Caco-2 (cell line): ENCODE measurements at regions of chr2 and their contacts with region 1.

Region 1: GRCh38 chr2:218444692-218445357 is 25.9 kb downstream of the VIL1 start:
- DNase-seq: peak; percentile 84 to 91
- H3K4me3 ChIP-seq: no peak overlapping the region
- H3K4me3 Mint-ChIP-seq: peak overlapping the region; percentile 60
- H3K27ac Mint-ChIP-seq: peak overlapping the region; percentile 74
- H3K4me1 ChIP-seq: peaks cover 61% of the 10 kb centered on the region
- H3K4me1 Mint-ChIP-seq: peaks cover 31% of the 10 kb centered on the region
- H3K27me3 ChIP-seq: no peaks in the 10 kb centered on the region
- H3K27me3 Mint-ChIP-seq: no peaks in the 10 kb centered on the region
- CTCF ChIP-seq: no peak

Region 2: DNA sequence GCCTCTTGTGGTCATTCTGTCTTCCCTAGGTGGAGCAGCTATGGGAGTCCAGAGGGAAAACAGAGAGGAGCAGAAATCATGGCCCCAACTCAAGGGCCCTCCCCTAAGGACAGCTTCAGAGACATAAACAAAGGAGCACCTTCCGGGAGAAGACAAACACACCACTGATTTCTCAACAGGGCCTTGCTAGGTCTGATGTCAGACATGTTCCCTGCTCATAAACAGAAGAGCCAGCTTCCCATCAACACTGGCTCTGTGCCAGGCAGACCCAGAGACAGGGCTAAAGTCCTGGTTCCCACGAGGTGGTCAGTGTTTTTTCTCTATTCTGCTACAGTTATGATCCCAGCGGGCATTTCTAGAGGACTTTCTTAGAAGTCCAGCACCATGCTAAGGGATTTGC is 299.7 kb before region 1 on chr2:
- CTCF ChIA-PET with region 1: no interaction called
- POLR2A ChIA-PET with region 1: no interaction called
- intact Hi-C with region 1: no loop called
- DNase-seq: no peak
- H3K4me3 ChIP-seq: no peak overlapping the region
- H3K4me3 Mint-ChIP-seq: no peak overlapping the region
- H3K27ac Mint-ChIP-seq: no peak overlapping the region
- H3K4me1 ChIP-seq: no peaks in the 10 kb centered on the region
- H3K4me1 Mint-ChIP-seq: no peaks in the 10 kb centered on the region
- H3K27me3 ChIP-seq: no peaks in the 10 kb centered on the region
- H3K27me3 Mint-ChIP-seq: peaks cover 7% of the 10 kb centered on the region
- CTCF ChIP-seq: no peak

Region 3: DNA sequence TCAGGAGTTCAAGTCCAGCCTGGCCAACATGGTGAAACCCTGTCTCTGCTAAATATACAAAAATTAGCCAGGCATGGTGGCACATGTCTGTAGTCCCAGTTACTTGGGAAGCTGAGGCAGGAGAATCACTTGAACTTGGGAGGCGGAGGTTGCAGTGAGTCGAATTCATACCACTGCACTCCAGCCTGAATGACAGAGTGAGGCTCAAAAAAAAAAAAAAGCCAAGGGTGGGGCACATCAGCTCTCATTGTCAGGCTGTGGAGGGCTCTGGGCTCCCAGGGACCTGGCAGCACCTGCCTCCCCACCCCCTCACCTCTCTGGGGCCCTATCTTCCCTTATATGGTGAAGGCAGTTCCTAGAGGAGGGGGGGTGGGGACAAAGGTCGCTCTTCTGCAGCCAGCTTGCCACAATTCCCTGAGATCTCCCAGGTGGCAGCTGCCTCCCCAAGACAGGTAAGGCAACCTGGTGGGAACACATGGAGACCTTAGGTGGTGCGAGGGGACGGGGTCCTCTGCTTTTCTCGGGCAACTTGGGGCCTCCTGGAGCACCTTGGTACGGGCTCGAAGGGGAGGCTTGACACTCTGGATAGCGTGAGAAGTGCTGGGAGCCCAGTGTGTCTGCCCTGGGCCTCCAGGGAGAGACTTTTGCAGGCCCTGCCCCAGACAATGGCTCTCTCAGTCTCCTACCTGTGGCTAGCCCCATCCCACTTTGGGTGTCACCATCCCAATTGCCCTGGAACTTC is 25.9 kb before region 1 on chr2 and contains the start of gene VIL1:
- CTCF ChIA-PET with region 1: interaction called, 6 read pairs
- POLR2A ChIA-PET with region 1: interaction called, 4 read pairs
- intact Hi-C with region 1: loop called (anchors 1 kb)
- DNase-seq: peak; percentile 95 to 98
- H3K4me3 ChIP-seq: peak within 1 kb of the TSS; percentile 93
- H3K4me3 Mint-ChIP-seq: peak within 1 kb of the TSS; percentile 90
- H3K27ac Mint-ChIP-seq: peak within 1 kb of the TSS; percentile 88
- H3K4me1 ChIP-seq: peaks cover 42% of the 10 kb centered on the region
- H3K4me1 Mint-ChIP-seq: peaks cover 33% of the 10 kb centered on the region
- H3K27me3 ChIP-seq: no peaks in the 10 kb centered on the region
- H3K27me3 Mint-ChIP-seq: no peaks in the 10 kb centered on the region
- CTCF ChIP-seq: no peak
- total RNA-seq, gene VIL1: 401 and 448 TPM in 2 replicates

Region 4: DNA sequence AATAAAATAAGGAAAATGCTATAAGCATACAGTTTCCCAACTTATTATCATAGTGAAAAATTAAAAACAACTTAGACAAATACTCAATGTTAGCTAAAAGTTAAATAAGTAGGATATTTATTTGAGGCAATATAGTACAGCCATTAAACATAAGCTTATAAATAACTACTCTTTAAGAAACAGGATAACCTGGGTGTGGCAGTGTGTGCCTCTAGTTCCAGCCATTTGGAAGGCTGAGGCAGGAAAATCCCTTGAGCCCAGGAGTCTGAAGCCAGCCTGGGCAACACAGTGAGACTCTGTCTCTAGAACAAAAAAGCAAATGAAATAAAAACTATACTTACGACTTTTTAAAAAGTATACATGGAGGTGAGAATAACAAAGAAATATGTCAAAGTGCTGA is 13.8 kb after region 1 on chr2:
- CTCF ChIA-PET with region 1: interaction called, 3 read pairs
- POLR2A ChIA-PET with region 1: no interaction called
- intact Hi-C with region 1: loop called (anchors 2 kb)
- DNase-seq: no peak
- H3K4me3 ChIP-seq: no peak overlapping the region
- H3K4me3 Mint-ChIP-seq: no peak overlapping the region
- H3K27ac Mint-ChIP-seq: no peak overlapping the region
- H3K4me1 ChIP-seq: no peaks in the 10 kb centered on the region
- H3K4me1 Mint-ChIP-seq: peaks cover 8% of the 10 kb centered on the region
- H3K27me3 ChIP-seq: no peaks in the 10 kb centered on the region
- H3K27me3 Mint-ChIP-seq: no peaks in the 10 kb centered on the region
- CTCF ChIP-seq: no peak

Region 5: GRCh38 chr2:218466016-218466521 is 21.2 kb after region 1 on chr2:
- CTCF ChIA-PET with region 1: interaction called, 3 read pairs
- POLR2A ChIA-PET with region 1: no interaction called
- intact Hi-C with region 1: loop called (anchors 1 kb)
- DNase-seq: no peak
- H3K4me3 ChIP-seq: no peak overlapping the region
- H3K4me3 Mint-ChIP-seq: no peak overlapping the region
- H3K27ac Mint-ChIP-seq: no peak overlapping the region
- H3K4me1 ChIP-seq: no peaks in the 10 kb centered on the region
- H3K4me1 Mint-ChIP-seq: no peaks in the 10 kb centered on the region
- H3K27me3 ChIP-seq: no peaks in the 10 kb centered on the region
- H3K27me3 Mint-ChIP-seq: no peaks in the 10 kb centered on the region
- CTCF ChIP-seq: peak; percentile 21 to 52

Region 6: DNA sequence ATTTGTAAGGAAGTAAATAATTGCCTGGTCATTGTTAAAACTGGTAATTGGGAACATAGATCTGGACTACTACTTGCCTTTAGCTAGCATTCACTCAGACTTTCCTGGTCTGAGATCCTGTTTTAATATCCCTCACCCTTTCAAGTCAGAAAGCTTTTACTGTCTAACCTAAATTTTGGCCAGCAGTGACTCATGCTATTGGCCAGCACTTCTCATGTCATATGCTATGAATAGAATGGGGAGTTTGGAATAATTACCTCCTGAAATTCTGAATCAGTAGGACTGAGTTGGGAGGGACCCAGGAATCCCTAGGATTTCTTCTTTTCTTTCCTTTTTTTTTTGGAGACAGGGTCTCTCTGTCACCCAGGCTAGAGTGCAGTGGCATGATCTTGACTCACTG is 246.4 kb after region 1 on chr2:
- CTCF ChIA-PET with region 1: no interaction called
- POLR2A ChIA-PET with region 1: no interaction called
- intact Hi-C with region 1: no loop called
- DNase-seq: no peak
- H3K4me3 ChIP-seq: no peak overlapping the region
- H3K4me3 Mint-ChIP-seq: no peak overlapping the region
- H3K27ac Mint-ChIP-seq: no peak overlapping the region
- H3K4me1 ChIP-seq: no peaks in the 10 kb centered on the region
- H3K4me1 Mint-ChIP-seq: peaks cover 6% of the 10 kb centered on the region
- H3K27me3 ChIP-seq: no peaks in the 10 kb centered on the region
- H3K27me3 Mint-ChIP-seq: no peaks in the 10 kb centered on the region
- CTCF ChIP-seq: no peak

Region 7: GRCh38 chr2:218806346-218806978 is 361.6 kb after region 1 on chr2:
- CTCF ChIA-PET with region 1: no interaction called
- POLR2A ChIA-PET with region 1: no interaction called
- intact Hi-C with region 1: no loop called
- DNase-seq: no peak
- H3K4me3 ChIP-seq: no peak overlapping the region
- H3K4me3 Mint-ChIP-seq: no peak overlapping the region
- H3K27ac Mint-ChIP-seq: no peak overlapping the region
- H3K4me1 ChIP-seq: no peaks in the 10 kb centered on the region
- H3K4me1 Mint-ChIP-seq: no peaks in the 10 kb centered on the region
- H3K27me3 ChIP-seq: no peaks in the 10 kb centered on the region
- H3K27me3 Mint-ChIP-seq: no peaks in the 10 kb centered on the region
- CTCF ChIP-seq: no peak